ENCODE measurements at regions of chr9 and their contacts with region 1.

Region 1: DNA sequence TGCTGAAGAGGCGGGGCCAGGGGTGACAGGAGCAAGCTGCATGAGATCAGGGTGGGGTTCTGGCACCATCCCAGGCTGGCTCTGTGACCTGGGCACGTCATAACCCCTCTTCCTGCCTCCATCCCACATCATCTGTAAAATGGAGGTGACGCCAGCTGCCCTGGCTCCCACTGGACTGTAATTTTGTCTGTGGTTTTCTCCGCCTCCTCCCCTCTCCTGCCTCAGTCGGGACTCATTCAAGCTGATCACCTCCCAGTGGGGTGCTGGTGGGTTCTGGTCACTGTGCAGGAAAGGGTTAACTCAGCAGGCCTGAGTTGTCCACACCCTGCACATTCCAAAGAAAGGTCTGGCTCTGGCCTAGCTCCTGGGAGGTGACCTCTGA is 128.2 kb downstream of the RXRA start:
- DNase-seq: no peak
- ATAC-seq: no peak

Region 2: DNA sequence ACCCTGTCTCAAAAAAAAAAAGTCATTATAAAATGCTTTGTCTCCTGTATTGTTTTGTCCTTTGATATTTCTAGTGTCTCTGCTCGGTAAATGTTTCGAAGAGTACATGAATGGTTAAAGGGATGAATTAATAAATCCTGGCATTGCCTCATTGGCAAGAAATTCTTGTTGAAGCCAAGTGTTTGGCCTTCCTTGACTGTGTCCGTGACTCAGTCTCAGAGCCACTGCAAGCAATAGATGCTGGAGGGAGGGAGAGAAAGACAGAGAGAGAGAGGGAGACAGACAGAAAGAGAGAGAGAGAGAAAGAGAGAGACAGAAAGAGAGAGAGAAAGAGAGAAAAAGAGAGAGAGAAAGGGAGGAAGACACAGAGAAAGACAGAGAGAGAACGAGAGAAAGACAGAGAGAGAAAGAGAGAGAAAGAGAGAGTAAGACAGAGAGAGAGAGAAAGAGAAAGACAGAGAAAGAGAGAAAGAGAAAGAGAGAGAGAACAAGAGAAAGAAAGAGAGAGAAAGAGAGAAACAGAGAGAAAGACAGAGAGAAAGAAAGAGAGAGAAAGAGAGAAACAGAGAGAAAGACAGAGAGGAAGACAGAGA is 200.8 kb before region 1 on chr9:
- intact Hi-C with region 1: no loop called
- DNase-seq: no peak
- ATAC-seq: no peak

Region 3: GRCh38 chr9:134689321-134690181 is 235.1 kb after region 1 on chr9:
- intact Hi-C with region 1: loop called (anchors 5 kb)
- DNase-seq: peak; percentile 85
- ATAC-seq: peak; percentile 86

Region 4: DNA sequence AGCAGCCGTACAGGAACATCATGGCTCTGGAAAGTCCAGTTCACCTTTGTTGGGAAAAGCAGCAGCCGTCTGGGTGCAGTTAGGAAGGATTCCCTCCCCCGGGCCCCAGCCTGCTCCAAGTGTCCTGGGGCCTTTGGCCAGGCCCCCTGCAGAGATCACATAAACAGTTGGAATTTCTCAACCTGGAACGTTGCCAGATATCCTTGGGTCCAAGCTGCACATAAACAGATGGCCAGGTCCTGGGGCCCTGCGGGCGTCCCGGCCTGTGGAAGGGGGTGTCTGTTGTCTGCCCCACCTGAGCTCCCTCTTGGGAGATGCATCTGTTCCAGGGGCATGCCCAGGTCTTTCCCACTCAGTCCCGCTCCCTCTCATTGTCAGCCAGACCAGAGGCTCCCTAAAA is 279.8 kb after region 1 on chr9:
- intact Hi-C with region 1: loop called (anchors 2 kb)
- DNase-seq: peak; percentile 65
- ATAC-seq: peak; percentile 14